Heart left ventricle (tissue), 16 donors: ENCODE measurements at regions of chr2 and their contacts with region 1.

Region 1: GRCh38 chr2:177679611-177680605 is 287.3 kb downstream of the AGPS start:
- DNase-seq: peak in 3 of 5 donors; percentile 26 to 28 (median 27)
- ATAC-seq: peak; percentile 70 to 93 (median 77)
- H3K4me3 ChIP-seq: no peak overlapping the region
- H3K27ac ChIP-seq: peak overlapping the region in 9 of 12 donors; percentile 41 to 83 (median 61)
- H3K4me1 ChIP-seq: peaks cover 0 to 21% (median 7%) of the 10 kb centered on the region in 12 donors
- H3K27me3 ChIP-seq: no peaks in the 10 kb centered on the region
- CTCF ChIP-seq: no peak
- POLR2A ChIP-seq: no peak

Region 2: GRCh38 chr2:177636672-177637071 is 43.2 kb before region 1 on chr2:
- intact Hi-C with region 1: loop called in 1 of 10 experiments (anchors 5 kb)
- DNase-seq: no peak
- ATAC-seq: no peak
- H3K4me3 ChIP-seq: no peak overlapping the region
- H3K27ac ChIP-seq: no peak overlapping the region
- H3K4me1 ChIP-seq: peaks cover 0 to 18% (median 0%) of the 10 kb centered on the region in 12 donors
- H3K27me3 ChIP-seq: no peaks in the 10 kb centered on the region
- CTCF ChIP-seq: no peak
- POLR2A ChIP-seq: no peak